ENCODE measurements at regions of chr7 and their contacts with region 1.

Region 1: DNA sequence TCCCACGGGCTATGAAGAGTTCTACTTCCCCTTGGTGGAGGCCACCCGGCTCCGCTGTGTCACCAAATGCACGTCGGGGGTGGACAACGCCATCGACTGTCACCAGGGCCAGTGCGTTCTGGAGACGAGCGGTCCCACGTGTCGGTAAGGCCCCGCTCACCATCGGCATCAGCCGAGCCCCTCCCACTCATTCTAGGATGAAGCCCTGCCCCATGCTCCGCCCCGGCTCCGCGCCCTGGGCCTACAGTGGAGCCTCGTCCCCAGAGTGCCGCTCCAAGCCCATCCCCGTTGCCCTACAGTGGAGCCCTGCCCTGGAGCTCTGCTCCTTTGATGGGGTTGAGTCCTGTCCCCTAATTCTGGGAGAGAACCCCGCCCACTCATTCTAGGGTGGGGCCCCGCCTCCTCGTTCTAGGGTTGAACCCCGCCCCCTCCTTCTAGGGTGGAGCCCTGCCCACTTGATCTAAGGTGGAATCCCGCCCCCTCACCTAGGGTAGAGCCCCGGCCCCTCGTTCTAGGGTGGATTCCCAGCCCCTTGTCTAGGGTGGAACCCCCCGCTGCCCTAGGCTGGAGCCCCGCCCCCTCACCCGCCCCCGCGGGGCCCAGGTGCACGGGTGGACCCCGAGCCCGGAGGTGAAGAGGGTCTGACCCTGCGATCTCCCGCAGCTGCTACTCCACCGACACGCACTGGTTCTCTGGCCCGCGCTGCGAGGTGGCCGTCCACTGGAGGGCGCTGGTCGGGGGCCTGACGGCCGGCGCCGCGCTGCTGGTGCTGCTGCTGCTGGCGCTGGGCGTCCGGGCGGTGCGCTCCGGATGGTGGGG is 3.4 kb upstream of the MUC12 start:
- DNase-seq: peak; percentile 93
- H3K4me3 Mint-ChIP-seq: peak overlapping the region; percentile 74
- H3K27ac Mint-ChIP-seq: no peak overlapping the region
- H3K4me1 Mint-ChIP-seq: peaks cover 8% of the 10 kb centered on the region
- H3K27me3 Mint-ChIP-seq: peaks cover 38% of the 10 kb centered on the region

Region 2: GRCh38 chr7:100889761-100890634 is 75.9 kb before region 1 on chr7:
- intact Hi-C with region 1: loop called (anchors 5 kb)
- DNase-seq: peak; percentile 98
- H3K4me3 Mint-ChIP-seq: peak overlapping the region; percentile 83
- H3K27ac Mint-ChIP-seq: peak overlapping the region; percentile 77
- H3K4me1 Mint-ChIP-seq: peaks cover 39% of the 10 kb centered on the region
- H3K27me3 Mint-ChIP-seq: peaks cover 32% of the 10 kb centered on the region

Region 3: DNA sequence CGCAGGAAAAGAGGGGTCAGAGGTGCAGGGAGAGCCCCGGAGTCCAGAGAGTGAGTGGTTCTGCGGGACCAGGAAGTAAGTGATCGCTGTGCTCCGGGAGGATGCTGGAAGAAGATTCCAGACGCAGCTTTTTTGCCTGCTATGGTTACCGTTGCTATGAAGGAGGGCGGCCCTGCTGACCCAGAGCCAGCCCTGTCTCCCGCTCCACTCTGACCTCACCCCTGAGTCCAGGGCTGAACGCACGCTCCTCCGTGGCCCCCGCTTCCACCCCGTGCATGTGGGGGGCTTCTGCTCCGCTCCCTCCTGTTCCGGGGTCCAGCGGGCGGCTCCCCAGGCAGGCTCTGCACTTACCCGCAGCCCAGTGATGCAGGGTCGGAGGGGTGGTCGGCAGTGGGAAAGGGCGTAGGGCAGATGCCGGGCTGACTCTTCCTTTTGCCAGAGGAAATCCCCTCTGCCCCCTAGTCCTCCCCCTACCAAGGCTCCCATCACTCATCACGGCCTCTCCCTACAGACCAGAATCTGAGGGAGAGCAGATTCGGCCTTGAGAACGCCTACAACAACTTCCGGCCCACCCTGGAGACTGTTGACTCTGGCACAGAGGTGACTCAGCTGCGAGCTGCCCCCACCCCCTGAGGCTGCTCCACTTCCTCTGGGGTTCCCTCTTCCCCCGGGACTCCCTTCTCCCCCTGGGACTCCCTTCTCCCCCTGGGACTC is 51.3 kb after region 1 on chr7:
- intact Hi-C with region 1: loop called (anchors 2 kb)
- DNase-seq: peak; percentile 90
- H3K4me3 Mint-ChIP-seq: peak overlapping the region; percentile 88
- H3K27ac Mint-ChIP-seq: peak overlapping the region; percentile 92
- H3K4me1 Mint-ChIP-seq: peaks cover 21% of the 10 kb centered on the region
- H3K27me3 Mint-ChIP-seq: peaks cover 3% of the 10 kb centered on the region

Region 4: DNA sequence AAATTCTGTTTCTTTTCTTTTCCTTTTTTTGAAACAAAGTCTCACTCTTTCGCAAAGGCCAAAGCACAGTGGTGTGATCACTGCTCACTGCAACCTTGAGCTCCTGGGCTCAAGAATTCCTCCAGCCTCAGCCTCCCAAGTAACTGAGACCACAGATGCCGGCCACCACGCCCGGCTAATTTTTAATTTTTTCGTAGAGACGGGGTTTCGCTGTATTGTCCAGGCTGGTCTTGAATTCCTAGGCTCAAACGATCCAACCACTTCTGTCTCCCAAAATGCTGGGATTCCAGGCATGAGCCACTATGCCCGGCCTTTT is 93.7 kb after region 1 on chr7:
- intact Hi-C with region 1: loop called (anchors 1 kb)
- DNase-seq: no peak
- H3K4me3 Mint-ChIP-seq: no peak overlapping the region
- H3K27ac Mint-ChIP-seq: no peak overlapping the region
- H3K4me1 Mint-ChIP-seq: peaks cover 2% of the 10 kb centered on the region
- H3K27me3 Mint-ChIP-seq: peaks cover 27% of the 10 kb centered on the region

Region 5: DNA sequence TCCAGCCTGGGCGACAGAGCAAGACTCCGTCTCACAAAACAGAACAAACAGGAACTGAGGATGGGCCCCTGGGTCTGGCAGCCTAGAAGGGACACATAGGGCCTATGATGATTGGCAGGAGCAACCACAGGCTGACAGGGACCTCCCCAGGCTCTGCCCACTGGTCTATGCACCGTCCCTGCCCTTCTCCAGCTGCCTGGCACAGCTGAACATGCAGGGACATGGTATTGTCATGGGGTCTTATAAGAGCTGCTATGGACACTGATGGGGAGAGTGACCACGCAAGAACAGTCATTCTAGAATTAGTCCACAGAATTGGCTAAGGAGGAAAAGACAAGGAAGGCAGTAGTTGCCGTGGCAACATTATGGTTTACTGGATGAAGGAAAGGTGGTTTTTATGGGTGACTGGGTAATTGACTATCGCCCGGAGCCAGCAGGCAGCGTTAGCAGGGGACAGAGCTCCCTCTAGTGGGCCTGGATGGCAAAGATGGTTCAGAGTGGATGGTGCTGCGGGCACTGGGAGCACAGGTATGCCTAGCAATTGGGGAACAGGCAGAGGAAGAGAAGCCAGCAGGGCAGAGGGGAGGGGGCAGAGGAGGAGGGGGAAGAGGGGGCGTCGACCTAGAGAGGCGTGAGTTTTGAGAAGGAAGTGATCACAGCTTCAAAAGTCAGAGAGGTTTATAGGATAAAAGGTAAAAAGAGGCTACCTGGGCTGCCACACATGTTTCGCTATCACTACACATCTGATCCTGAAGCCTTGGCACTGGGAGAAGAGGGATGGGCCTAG is 111.6 kb after region 1 on chr7:
- intact Hi-C with region 1: loop called (anchors 5 kb)
- DNase-seq: peak; percentile 95
- H3K4me3 Mint-ChIP-seq: no peak overlapping the region
- H3K27ac Mint-ChIP-seq: no peak overlapping the region
- H3K4me1 Mint-ChIP-seq: peaks cover 7% of the 10 kb centered on the region
- H3K27me3 Mint-ChIP-seq: peaks cover 18% of the 10 kb centered on the region